Activated CD8-positive, alpha-beta T cell treated with anti-CD3 and anti-CD28 coated beads for 36 hours (primary cell): ENCODE measurements at regions of chr11 and their contacts with region 1.

Region 1: GRCh38 chr11:122863704-122864326 is 18.7 kb upstream of the JHY start:
- DNase-seq: peak; percentile 66
- ATAC-seq: no peak
- H3K4me3 Mint-ChIP-seq: no peak overlapping the region
- H3K27ac Mint-ChIP-seq: no peak overlapping the region
- H3K4me1 Mint-ChIP-seq: peaks cover 17% of the 10 kb centered on the region
- H3K27me3 Mint-ChIP-seq: no peaks in the 10 kb centered on the region
- CTCF ChIP-seq: peak; percentile 89

Region 2: DNA sequence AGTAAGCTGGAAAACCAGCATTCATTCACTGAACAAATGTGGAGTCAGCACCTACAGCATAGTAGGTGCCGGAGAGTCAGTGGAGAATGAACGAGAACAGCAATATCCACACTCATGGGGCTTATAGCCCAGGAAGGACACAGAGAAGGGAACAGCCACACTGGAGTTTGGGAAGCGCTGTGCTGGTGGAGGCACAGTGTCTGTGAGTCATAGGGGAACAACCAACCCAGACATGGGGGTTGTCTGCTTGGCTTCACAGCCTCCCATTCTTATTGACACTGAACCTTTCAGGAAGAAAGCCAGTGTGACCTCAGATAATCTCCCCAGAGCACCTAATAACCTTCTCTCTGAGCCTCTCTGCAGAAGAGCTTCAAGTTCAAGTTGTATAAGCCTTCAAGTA is 264.8 kb before region 1 on chr11:
- CTCF ChIA-PET with region 1: no interaction called
- POLR2A ChIA-PET with region 1: no interaction called
- intact Hi-C with region 1: no loop called
- DNase-seq: no peak
- ATAC-seq: no peak
- H3K4me3 Mint-ChIP-seq: no peak overlapping the region
- H3K27ac Mint-ChIP-seq: no peak overlapping the region
- H3K4me1 Mint-ChIP-seq: no peaks in the 10 kb centered on the region
- H3K27me3 Mint-ChIP-seq: peaks cover 10% of the 10 kb centered on the region
- CTCF ChIP-seq: no peak

Region 3: DNA sequence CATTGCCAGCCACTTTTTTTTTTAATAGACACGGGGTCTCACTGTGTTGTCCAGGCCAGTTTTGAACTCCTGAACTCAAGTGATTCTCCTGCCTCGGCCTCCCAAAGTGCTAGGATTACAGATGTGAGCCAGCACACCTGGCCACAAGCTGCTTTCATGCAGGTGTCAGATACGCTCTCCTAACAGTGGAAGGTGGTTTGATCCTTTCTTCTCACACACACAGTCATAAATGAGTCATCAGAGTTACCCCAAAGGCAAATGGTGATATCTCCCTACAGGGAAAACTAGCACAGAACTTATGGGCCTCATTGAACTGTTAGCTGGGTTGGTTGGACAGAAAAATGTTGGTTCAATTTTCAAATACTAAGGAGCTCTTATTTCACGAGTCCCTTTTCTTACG is 246.5 kb before region 1 on chr11:
- CTCF ChIA-PET with region 1: no interaction called
- POLR2A ChIA-PET with region 1: no interaction called
- intact Hi-C with region 1: no loop called
- DNase-seq: no peak
- ATAC-seq: peak; percentile 20
- H3K4me3 Mint-ChIP-seq: no peak overlapping the region
- H3K27ac Mint-ChIP-seq: no peak overlapping the region
- H3K4me1 Mint-ChIP-seq: peaks cover 3% of the 10 kb centered on the region
- H3K27me3 Mint-ChIP-seq: no peaks in the 10 kb centered on the region
- CTCF ChIP-seq: no peak

Region 4: DNA sequence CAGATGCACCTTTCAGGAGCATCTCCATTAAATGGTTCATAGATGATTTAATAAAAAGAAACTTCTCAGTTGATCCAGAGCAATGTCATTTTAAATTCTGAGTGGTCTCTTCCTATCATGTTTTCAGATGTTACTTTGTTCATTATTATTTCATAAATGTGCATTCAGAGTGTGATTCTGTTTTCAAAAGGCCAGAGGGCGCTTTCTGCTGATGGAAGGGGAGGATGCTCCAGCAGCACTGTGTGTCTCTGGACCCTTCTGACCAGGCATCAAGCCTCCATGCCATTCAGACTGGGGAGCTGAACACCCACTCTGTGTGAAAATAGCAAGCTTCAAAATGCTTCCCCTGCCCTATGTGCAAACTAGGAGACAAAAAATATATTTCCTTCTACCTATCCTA is 49.4 kb before region 1 on chr11:
- CTCF ChIA-PET with region 1: interaction called, 21 read pairs
- POLR2A ChIA-PET with region 1: interaction called, 3 read pairs
- intact Hi-C with region 1: no loop called
- DNase-seq: peak; percentile 27
- ATAC-seq: peak; percentile 58
- H3K4me3 Mint-ChIP-seq: no peak overlapping the region
- H3K27ac Mint-ChIP-seq: no peak overlapping the region
- H3K4me1 Mint-ChIP-seq: peaks cover 42% of the 10 kb centered on the region
- H3K27me3 Mint-ChIP-seq: no peaks in the 10 kb centered on the region
- CTCF ChIP-seq: peak; percentile 39

Region 5: DNA sequence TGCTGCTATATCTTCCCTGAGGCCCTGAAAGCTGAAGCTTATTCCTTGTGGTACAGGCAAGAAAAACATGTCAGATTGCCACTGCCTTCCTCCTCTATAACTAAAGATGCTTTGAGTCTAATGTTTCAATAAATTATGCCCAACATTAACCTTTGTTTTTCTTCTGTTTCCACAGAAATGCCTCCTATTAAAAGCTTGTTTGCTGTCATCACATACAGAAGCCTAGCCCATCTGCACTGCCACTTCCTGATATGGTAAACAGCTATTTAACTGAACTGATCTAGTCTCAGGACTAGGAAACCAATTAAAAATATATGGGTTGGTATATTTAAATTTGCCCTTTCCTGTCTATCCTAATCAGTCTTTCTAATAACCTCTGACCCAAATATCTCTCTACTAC is 42.6 kb before region 1 on chr11:
- CTCF ChIA-PET with region 1: interaction called, 11 read pairs
- POLR2A ChIA-PET with region 1: no interaction called
- intact Hi-C with region 1: no loop called
- DNase-seq: no peak
- ATAC-seq: no peak
- H3K4me3 Mint-ChIP-seq: no peak overlapping the region
- H3K27ac Mint-ChIP-seq: no peak overlapping the region
- H3K4me1 Mint-ChIP-seq: peaks cover 22% of the 10 kb centered on the region
- H3K27me3 Mint-ChIP-seq: no peaks in the 10 kb centered on the region
- CTCF ChIP-seq: no peak

Region 6: DNA sequence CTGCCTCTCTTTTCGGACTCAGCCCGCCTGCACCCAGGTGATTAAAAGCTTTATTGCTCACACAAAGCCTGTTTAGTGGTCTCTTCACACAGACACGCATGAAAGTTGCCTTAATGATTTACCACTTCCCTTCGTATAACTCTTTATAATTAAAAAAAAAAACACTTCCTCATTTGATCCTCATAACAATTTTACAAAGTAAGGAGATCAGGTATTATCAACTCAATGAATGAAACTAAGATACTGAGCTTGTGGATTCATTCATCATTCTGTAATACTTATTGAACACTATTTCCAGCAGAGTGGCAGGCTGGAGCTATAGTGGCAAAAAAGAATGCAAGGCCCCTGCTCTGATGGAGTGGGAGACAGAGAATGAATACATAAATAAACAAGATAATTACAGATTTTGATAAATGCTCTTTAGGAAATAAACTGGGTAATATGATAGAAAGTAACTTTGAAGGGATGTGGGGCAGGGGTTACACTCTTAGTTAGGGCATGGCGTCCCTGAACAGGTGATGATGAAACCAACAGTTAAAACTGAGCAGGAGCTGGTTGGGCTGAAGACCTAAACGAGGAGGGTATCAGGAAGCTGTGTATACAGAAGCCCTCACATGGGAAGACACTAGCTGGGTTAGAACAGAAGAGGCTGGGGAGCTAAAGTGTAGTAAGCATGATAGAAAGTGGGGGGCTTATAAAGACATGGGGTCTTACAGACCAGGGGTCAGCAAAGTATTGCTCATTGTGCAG is 30.9 kb before region 1 on chr11:
- CTCF ChIA-PET with region 1: interaction called, 12 read pairs
- POLR2A ChIA-PET with region 1: interaction called, 5 read pairs
- intact Hi-C with region 1: no loop called
- DNase-seq: no peak
- ATAC-seq: peak; percentile 54
- H3K4me3 Mint-ChIP-seq: peak overlapping the region; percentile 7
- H3K27ac Mint-ChIP-seq: peak overlapping the region; percentile 65
- H3K4me1 Mint-ChIP-seq: peaks cover 45% of the 10 kb centered on the region
- H3K27me3 Mint-ChIP-seq: no peaks in the 10 kb centered on the region
- CTCF ChIP-seq: no peak

Region 7: GRCh38 chr11:122874991-122875390 is 11.2 kb after region 1 on chr11:
- CTCF ChIA-PET with region 1: interaction called, 44 read pairs
- POLR2A ChIA-PET with region 1: interaction called, 4 read pairs
- intact Hi-C with region 1: no loop called
- DNase-seq: no peak
- ATAC-seq: no peak
- H3K4me3 Mint-ChIP-seq: no peak overlapping the region
- H3K27ac Mint-ChIP-seq: no peak overlapping the region
- H3K4me1 Mint-ChIP-seq: peaks cover 14% of the 10 kb centered on the region
- H3K27me3 Mint-ChIP-seq: no peaks in the 10 kb centered on the region
- CTCF ChIP-seq: no peak

Region 8: DNA sequence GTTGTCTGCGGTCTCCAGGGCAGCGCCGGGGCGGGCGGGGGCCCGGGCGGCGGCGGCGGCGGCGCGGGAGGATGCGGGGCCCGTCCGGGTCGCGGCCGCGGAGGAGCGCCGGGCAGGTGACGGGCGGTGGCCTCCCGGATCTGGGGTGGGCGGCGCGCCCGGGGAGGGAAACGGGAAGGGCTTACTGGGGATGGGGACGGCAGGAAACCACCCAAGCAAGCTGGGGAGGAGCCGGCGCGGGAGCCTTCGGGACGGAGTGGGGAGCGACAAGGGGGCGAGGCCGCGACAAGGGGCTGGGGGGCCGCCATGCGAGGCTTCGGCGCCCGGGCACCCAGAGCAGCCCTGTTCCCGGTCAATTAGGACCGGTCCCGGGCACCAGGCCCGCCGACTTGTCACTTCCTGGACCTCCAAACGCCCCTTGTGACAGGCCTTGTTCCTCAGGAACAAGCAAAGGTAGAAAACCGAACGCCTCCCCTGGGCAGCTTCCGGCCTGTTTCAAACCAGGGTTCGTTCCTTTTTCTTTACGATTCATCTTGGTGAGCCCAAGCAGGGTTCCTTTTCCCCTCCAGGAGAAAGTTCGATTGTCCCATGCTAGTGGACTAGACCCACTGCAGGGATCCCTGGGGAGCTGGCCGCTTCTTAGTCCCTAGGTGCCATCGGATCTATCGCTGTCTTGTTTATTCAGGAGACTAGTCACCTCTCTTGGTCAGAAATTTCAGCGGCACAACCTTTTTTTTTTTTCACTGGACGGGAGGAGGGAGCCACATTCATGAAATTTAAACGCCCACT is 19.2 kb after region 1 on chr11:
- CTCF ChIA-PET with region 1: interaction called, 44 read pairs
- POLR2A ChIA-PET with region 1: interaction called, 4 read pairs
- intact Hi-C with region 1: no loop called
- DNase-seq: peak; percentile 57
- ATAC-seq: peak; percentile 71
- H3K4me3 Mint-ChIP-seq: peak overlapping the region; percentile 81
- H3K27ac Mint-ChIP-seq: peak overlapping the region; percentile 85
- H3K4me1 Mint-ChIP-seq: peaks cover 27% of the 10 kb centered on the region
- H3K27me3 Mint-ChIP-seq: no peaks in the 10 kb centered on the region
- CTCF ChIP-seq: no peak

Region 9: DNA sequence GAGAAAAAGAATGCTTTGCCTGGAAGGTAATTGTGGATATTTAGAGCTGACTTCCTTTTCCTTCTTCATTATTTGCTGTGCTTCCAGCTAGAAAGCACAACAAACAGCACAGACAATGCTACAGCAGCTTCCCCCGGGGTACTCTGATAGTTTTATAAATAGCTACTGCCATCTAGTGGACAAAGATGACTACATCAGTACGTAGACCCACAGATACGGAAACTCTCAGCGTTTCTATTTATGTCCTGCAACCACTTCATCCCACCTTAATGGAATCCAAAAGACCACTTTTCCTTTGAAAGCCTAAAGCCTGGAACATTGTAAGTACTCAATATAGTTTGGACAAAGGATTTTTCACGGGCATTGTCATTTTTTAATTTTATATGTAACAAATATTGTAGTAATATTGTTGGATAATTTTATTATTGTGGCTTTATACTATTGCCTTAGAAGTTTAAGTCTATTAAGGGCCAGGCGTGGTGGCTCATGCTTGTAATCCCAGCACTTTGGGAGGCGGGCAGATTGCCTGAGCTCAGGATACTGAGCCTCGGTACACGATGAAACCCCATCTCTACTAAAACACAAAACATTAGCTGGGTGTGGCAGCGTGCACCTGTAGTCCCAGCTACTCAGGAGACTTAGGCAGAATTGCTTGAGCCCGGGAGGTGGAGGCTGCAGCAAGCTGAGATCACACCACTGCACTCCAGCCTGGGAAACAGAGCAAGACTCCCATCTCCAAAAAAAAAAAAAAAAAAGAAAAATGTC is 190.7 kb after region 1 on chr11:
- CTCF ChIA-PET with region 1: interaction called, 50 read pairs
- POLR2A ChIA-PET with region 1: interaction called, 12 read pairs
- intact Hi-C with region 1: no loop called
- DNase-seq: peak; percentile 39
- ATAC-seq: peak; percentile 73
- H3K4me3 Mint-ChIP-seq: peak overlapping the region; percentile 12
- H3K27ac Mint-ChIP-seq: peak overlapping the region; percentile 99
- H3K4me1 Mint-ChIP-seq: peaks cover 39% of the 10 kb centered on the region
- H3K27me3 Mint-ChIP-seq: no peaks in the 10 kb centered on the region
- CTCF ChIP-seq: peak; percentile 83